PC-9 (cell line): ENCODE measurements at regions of chr22 and their contacts with region 1.

Region 1: GRCh38 chr22:31211862-31212730 is at the start of gene LIMK2:
- DNase-seq: peak; percentile 75 to 94
- H3K4me3 ChIP-seq: peak within 1 kb of the TSS; percentile 87
- H3K27ac ChIP-seq: no peak within 1 kb of the TSS
- H3K4me1 ChIP-seq: peaks cover 19% of the 10 kb centered on the region
- H3K27me3 ChIP-seq: no peaks in the 10 kb centered on the region
- CTCF ChIP-seq: peak; percentile 89
- total RNA-seq, gene LIMK2: 32.8 and 42.5 TPM in 2 replicates

Region 2: GRCh38 chr22:31122532-31123291 is 89.4 kb before region 1 on chr22 and contains the start of gene INPP5J:
- CTCF ChIA-PET with region 1: no interaction called
- POLR2A ChIA-PET with region 1: no interaction called
- intact Hi-C with region 1: no loop called
- DNase-seq: peak; percentile 34 to 48
- H3K4me3 ChIP-seq: peak within 1 kb of the TSS; percentile 57
- H3K27ac ChIP-seq: no peak within 1 kb of the TSS
- H3K4me1 ChIP-seq: peaks cover 6% of the 10 kb centered on the region; the same call in 1 of the 2 replicates
- H3K27me3 ChIP-seq: peaks cover 16% of the 10 kb centered on the region; the same call in 1 of the 2 replicates
- CTCF ChIP-seq: no peak
- total RNA-seq, gene INPP5J: 1.7 and 3.1 TPM in 2 replicates

Region 3: GRCh38 chr22:31185056-31185455 is 27.0 kb before region 1 on chr22:
- CTCF ChIA-PET with region 1: no interaction called
- POLR2A ChIA-PET with region 1: no interaction called
- intact Hi-C with region 1: no loop called
- DNase-seq: no peak
- H3K4me3 ChIP-seq: no peak overlapping the region
- H3K27ac ChIP-seq: no peak overlapping the region
- H3K4me1 ChIP-seq: 0 out of 2 replicates have a peak, but pooled peaks cover 2% of the 10 kb centered on the region
- H3K27me3 ChIP-seq: no peaks in the 10 kb centered on the region
- CTCF ChIP-seq: no peak

Region 4: DNA sequence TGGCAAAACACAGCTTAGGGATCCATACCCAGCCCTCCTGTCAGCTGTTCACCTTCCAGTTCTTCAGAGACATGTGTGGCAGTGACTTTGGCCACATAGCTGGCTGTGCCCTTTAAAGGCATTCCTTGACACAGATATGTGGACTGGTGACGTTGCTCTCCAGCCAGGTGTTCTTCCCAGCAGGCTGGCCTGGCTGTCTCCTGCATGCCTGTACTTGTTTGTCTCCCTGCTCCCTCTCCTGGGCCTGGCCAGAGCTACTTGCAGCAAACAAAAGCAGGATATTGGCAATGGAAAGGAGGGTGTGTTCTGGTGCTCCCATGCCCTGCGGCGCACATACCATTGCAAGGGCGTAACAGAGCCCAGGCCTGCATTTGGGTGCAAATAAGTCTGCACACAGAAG is 41.9 kb after region 1 on chr22:
- CTCF ChIA-PET with region 1: interaction called, 3 read pairs
- POLR2A ChIA-PET with region 1: no interaction called
- intact Hi-C with region 1: loop called (anchors 1 kb)
- DNase-seq: peak; percentile 81 to 95
- H3K4me3 ChIP-seq: no peak overlapping the region
- H3K27ac ChIP-seq: no peak overlapping the region
- H3K4me1 ChIP-seq: peaks cover 6% of the 10 kb centered on the region; the same call in 1 of the 2 replicates
- H3K27me3 ChIP-seq: no peaks in the 10 kb centered on the region
- CTCF ChIP-seq: no peak

Region 5: DNA sequence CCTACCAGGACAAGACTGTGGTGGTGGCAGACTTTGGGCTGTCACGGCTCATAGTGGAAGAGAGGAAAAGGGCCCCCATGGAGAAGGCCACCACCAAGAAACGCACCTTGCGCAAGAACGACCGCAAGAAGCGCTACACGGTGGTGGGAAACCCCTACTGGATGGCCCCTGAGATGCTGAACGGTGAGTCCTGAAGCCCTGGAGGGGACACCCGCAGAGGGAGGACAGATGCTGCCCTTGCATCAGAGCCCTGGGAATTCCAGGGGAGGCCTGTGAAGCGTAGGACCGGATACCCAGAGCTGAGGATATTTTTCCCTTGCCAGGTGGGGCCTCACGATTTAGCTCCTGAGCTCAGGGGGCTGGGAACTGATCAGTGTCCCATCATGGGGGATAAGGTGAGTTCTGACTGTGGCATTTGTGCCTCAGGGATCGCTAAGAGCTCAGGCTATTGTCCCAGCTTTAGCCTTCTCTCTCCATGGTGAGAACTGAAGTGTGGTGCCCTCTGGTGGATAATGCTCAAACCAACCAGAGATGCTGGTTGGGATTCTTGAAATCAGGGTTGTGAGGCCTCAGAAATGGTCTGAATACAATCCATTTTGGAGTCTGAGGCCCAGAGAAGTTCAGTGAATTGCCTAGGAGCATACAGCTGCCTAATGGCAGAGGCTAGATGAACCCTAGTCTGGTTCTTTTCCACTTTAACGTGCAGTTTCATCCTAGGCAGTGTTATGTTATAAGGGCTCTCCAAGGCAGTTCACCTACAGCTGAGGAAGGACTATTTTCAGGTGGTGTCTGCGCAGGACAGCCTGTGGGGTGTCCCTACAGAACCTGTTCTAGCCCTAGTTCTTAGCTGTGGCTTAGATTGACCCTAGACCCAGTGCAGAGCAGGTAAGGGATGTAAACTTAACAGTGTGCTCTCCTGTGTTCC is 60.7 kb after region 1 on chr22:
- CTCF ChIA-PET with region 1: interaction called, 28 read pairs
- POLR2A ChIA-PET with region 1: no interaction called
- intact Hi-C with region 1: loop called (anchors 1 kb)
- DNase-seq: peak; percentile 55 to 71
- H3K4me3 ChIP-seq: no peak overlapping the region
- H3K27ac ChIP-seq: no peak overlapping the region
- H3K4me1 ChIP-seq: peaks cover 50% of the 10 kb centered on the region
- H3K27me3 ChIP-seq: no peaks in the 10 kb centered on the region
- CTCF ChIP-seq: peak; percentile 88

Region 6: GRCh38 chr22:31313366-31314147 is 101.5 kb after region 1 on chr22:
- CTCF ChIA-PET with region 1: interaction called, 3 read pairs
- POLR2A ChIA-PET with region 1: no interaction called
- intact Hi-C with region 1: loop called (anchors 1 kb)
- DNase-seq: peak; percentile 84 to 88
- H3K4me3 ChIP-seq: no peak overlapping the region
- H3K27ac ChIP-seq: peak overlapping the region; percentile 61
- H3K4me1 ChIP-seq: peaks cover 10% of the 10 kb centered on the region
- H3K27me3 ChIP-seq: no peaks in the 10 kb centered on the region
- CTCF ChIP-seq: peak; percentile 96

Region 7: GRCh38 chr22:31602259-31602952 is 390.3 kb after region 1 on chr22:
- CTCF ChIA-PET with region 1: no interaction called
- POLR2A ChIA-PET with region 1: interaction called, 18 read pairs
- intact Hi-C with region 1: no loop called
- DNase-seq: peak; percentile 73 to 90
- H3K4me3 ChIP-seq: no peak overlapping the region
- H3K27ac ChIP-seq: peak overlapping the region; percentile 30
- H3K4me1 ChIP-seq: peaks cover 19% of the 10 kb centered on the region
- H3K27me3 ChIP-seq: no peaks in the 10 kb centered on the region
- CTCF ChIP-seq: no peak